Posterior vena cava (tissue), 2 donors: ENCODE measurements at regions of chr1 and their contacts with region 1.

Region 1: DNA sequence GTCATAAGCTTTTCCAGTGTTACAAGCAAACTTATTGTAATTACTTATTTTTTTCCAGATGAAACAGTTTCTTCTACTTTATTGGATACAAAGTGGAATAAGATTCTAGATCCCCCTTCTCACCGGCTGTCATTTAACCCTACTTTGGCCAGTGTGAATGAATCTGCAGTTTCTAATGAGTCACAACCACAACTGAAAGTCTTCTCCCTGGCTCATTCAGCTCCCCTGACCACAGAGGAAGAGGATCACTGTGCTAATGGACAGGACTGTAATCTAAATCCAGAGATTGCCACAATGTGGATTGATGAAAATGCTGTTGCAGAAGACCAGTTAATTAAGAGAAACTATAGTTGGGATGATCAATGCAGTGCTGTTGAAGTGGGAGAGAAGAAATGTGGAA is 95.5 kb downstream of the ZFYVE9 start:
- DNase-seq: no peak

Region 2: DNA sequence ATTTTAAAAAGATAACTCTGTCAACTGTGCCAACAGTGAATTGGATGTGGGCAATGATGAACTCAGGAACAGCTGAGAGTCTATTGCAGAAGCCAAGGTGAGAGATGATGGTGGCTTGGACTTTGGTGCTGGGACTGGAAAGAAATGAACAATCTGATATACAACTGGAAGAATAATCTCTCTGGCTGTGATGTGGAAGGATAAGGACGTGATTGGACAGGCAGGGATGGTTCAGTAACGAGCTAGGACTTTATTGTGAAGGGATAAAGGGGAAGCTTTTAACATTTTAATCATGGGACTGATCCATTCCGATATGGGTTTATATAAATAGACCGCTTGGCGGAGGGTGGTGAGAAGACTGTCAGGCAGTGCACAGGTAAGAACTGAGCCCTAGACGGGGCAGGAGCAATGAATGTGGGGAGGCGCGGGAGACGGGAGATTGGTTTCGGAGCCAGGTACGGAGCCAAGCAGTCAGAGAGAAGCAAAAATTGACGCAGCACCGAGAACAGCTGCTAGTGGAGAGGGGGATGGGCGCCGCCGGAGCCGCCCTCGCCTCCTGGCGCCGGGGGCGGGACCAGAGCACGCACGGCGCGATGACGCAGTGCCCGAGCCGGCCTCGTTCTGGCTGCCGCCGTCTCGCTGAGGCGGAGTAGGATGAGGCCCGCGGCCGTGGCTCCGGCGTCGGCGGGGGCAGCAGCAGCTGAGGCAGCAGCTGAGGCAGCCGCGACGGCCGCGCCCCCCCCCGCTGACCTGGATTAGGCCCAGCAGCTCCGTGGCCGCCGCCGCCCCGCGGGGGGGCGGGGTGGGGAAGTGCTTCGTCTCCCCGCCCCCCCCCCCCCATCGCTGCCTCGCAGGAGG is 1001.5 kb before region 1 on chr1 and contains the start of gene RNF11:
- intact Hi-C with region 1: no loop called
- DNase-seq: peak; percentile 98
- total RNA-seq, gene RNF11: 101 to 114 TPM

Region 3: DNA sequence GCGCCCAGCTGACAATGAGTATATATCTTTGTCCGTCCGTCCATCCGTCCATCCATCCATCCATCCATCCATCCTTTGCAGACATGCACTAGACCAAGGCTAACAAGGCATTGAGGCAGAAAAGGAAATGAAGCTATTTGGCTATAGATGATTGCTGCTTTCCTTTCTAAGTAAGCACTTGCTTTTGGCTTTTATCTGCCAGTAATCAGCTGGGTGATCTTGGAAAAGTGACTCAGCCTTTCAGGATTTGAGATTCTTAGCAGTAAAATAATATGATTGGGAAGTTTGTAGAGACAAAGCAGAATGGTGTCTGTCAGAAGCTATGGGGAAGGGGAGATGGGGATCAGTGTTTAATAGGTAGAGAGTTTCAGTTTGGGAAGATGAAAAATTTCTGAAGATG is 72.8 kb before region 1 on chr1:
- intact Hi-C with region 1: loop called in 1 of 2 experiments (anchors 10 kb)
- DNase-seq: no peak